H1 (cell line): ENCODE measurements at regions of chr3 and their contacts with region 1.

Region 1: GRCh38 chr3:134134240-134134639 is 104.5 kb upstream of the SLCO2A1 start:
- DNase-seq: no peak
- H3K4me3 ChIP-seq: no peak overlapping the region
- H3K27ac ChIP-seq: no peak overlapping the region
- H3K4me1 ChIP-seq: no peaks in the 10 kb centered on the region
- H3K27me3 ChIP-seq: no peaks in the 10 kb centered on the region
- CTCF ChIP-seq: no peak
- EP300 ChIP-seq: no peak
- POLR2A ChIP-seq: no peak
- RAD21 ChIP-seq: no peak

Region 2: GRCh38 chr3:133831966-133832802 is 302.1 kb before region 1 on chr3:
- CTCF ChIA-PET with region 1: no interaction called
- POLR2A ChIA-PET with region 1: no interaction called
- DNase-seq: peak in 1 of 2 experiments; percentile 42
- H3K4me3 ChIP-seq: no peak overlapping the region
- H3K27ac ChIP-seq: no peak overlapping the region
- H3K4me1 ChIP-seq: no peaks in the 10 kb centered on the region
- H3K27me3 ChIP-seq: no peaks in the 10 kb centered on the region
- CTCF ChIP-seq: peak in 2 of 3 experiments; percentile 47 to 52; a peak in 3 of 4 replicates
- EP300 ChIP-seq: no peak
- POLR2A ChIP-seq: no peak
- RAD21 ChIP-seq: peak; percentile 51 to 67

Region 3: GRCh38 chr3:134145177-134145576 is 10.9 kb after region 1 on chr3:
- CTCF ChIA-PET with region 1: interaction called, 18 read pairs
- POLR2A ChIA-PET with region 1: interaction called, 3 read pairs
- DNase-seq: no peak
- H3K4me3 ChIP-seq: no peak overlapping the region
- H3K27ac ChIP-seq: no peak overlapping the region
- H3K4me1 ChIP-seq: no peaks in the 10 kb centered on the region
- H3K27me3 ChIP-seq: no peaks in the 10 kb centered on the region
- CTCF ChIP-seq: peak; percentile 33 to 42 (median 41); a peak in 3 of 4 replicates
- EP300 ChIP-seq: no peak
- POLR2A ChIP-seq: no peak
- RAD21 ChIP-seq: peak in 1 of 2 experiments; percentile 40; a peak in 1 of 4 replicates

Region 4: DNA sequence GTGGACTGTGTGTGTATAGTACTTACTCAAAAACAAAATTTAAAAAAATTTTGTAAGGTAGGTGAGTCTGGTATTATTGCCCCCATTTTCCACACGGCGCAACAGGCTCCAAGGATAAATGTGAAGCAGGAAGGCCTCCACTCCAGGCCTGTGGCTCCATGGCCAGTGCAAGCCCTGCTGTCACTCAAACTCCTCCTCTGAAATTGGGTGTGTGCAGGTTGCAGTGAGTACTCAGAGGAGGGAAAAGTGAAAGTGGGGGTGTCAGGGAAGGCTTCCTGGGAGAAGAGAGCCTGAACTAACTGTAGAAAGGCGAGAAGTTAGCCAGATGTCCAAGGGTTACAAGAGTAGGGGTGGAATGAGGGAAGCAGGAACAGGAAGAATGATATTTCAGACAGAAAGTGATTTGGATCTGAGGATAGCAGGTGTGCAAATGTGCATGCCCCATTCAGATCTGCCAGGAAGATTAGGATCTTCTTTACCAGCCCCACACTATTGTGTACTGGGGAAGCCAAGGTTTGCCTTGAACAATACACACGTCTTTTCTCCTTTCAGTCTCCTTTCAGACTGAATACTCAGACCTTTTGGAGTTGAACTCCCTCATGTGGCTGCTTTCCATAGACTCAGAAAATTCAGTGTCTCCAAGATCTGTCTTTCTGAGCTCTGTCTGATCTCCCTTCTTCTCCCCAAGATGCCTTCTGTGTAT is 165.1 kb after region 1 on chr3:
- CTCF ChIA-PET with region 1: no interaction called
- POLR2A ChIA-PET with region 1: no interaction called
- DNase-seq: no peak
- H3K4me3 ChIP-seq: no peak overlapping the region
- H3K27ac ChIP-seq: no peak overlapping the region
- H3K4me1 ChIP-seq: 0 out of 7 replicates have a peak, but pooled peaks cover 0 to 2% (median 0%) of the 10 kb centered on the region in 4 experiments
- H3K27me3 ChIP-seq: no peaks in the 10 kb centered on the region
- CTCF ChIP-seq: peak in 2 of 3 experiments; percentile 32 to 43; a peak in 3 of 4 replicates
- EP300 ChIP-seq: no peak
- POLR2A ChIP-seq: no peak
- RAD21 ChIP-seq: peak; percentile 52 to 73